ENCODE measurements at regions of chr6 and their contacts with region 1.

Region 1: GRCh38 chr6:138517635-138518034 is 18.3 kb upstream of the NHSL1 start:
- DNase-seq: no peak
- ATAC-seq: peak; percentile 77
- H3K4me3 ChIP-seq: no peak overlapping the region
- H3K27ac ChIP-seq: no peak overlapping the region
- H3K4me1 ChIP-seq: no peaks in the 10 kb centered on the region; the same call in 1 of the 2 replicates
- H3K27me3 ChIP-seq: 0 out of 4 replicates have a peak, but pooled peaks cover 0 to 2% of the 10 kb centered on the region in 2 experiments
- CTCF ChIP-seq: peak; percentile 47 to 80 (median 75)
- EP300 ChIP-seq: no peak
- POLR2A ChIP-seq: no peak
- RAD21 ChIP-seq: peak; percentile 63

Region 2: DNA sequence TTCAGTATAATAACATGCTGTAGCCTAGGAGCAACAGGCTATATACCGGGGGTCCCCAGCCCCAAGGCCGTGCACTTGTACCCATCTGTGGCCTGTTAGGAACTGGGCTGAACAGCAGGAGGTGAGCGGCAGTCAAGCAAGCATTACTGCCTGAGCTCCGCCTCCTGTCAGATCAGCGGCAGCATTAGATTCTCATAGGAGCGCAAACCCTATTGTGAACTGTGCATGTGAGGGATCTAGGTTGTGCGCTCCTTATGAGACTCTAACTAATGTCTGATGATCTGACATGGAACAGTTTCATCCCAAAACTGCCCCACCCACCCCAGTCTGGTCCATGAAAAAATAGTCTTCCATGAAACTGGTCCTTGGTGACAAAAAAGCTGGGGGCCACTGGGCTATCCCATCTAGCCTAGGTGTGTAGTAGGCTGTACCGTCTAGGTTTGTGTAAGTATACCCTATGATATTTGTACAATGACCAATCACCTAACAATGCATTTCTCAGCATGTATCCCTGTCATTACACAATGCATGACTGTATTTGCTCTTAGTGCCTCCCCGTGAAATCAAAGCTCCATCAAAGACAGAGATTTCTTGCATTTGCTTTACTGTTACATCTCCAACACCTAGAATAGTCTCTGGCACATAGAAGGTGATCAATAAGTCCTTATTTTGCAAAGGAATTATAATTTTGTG is 49.2 kb before region 1 on chr6:
- CTCF ChIA-PET with region 1: no interaction called
- POLR2A ChIA-PET with region 1: no interaction called
- RAD21 ChIA-PET with region 1: no interaction called
- SMC1A ChIA-PET with region 1: no interaction called
- in situ Hi-C with region 1: no loop called
- intact Hi-C with region 1: no loop called
- DNase-seq: no peak
- ATAC-seq: no peak
- H3K4me3 ChIP-seq: no peak overlapping the region
- H3K27ac ChIP-seq: no peak overlapping the region
- H3K4me1 ChIP-seq: no peaks in the 10 kb centered on the region
- H3K27me3 ChIP-seq: no peaks in the 10 kb centered on the region
- CTCF ChIP-seq: no peak
- EP300 ChIP-seq: no peak
- POLR2A ChIP-seq: no peak
- RAD21 ChIP-seq: no peak

Region 3: DNA sequence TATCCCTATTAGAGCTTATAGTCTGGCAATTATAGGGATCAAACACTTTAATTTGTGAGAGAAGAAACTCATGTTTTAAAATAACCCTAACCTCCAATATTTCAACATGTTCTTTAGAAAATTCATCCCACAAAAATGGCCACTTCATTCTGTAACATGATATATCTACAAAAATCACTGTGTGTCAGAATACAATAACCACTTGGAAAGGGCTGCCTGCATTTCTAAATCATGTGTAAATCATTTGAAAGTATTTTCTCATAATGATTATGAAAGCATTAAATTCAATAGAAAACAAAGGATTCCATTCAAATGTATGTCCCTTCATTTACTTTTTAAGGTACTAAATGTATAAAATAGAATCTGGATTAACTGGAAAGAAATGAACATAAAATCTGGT is 83.1 kb after region 1 on chr6:
- CTCF ChIA-PET with region 1: no interaction called
- POLR2A ChIA-PET with region 1: interaction called, 10 read pairs
- RAD21 ChIA-PET with region 1: no interaction called
- SMC1A ChIA-PET with region 1: no interaction called
- in situ Hi-C with region 1: no loop called
- intact Hi-C with region 1: no loop called
- DNase-seq: no peak
- ATAC-seq: no peak
- H3K4me3 ChIP-seq: no peak overlapping the region
- H3K27ac ChIP-seq: no peak overlapping the region
- H3K4me1 ChIP-seq: no peaks in the 10 kb centered on the region
- H3K27me3 ChIP-seq: no peaks in the 10 kb centered on the region
- CTCF ChIP-seq: no peak
- EP300 ChIP-seq: no peak
- POLR2A ChIP-seq: no peak
- RAD21 ChIP-seq: no peak

Region 4: DNA sequence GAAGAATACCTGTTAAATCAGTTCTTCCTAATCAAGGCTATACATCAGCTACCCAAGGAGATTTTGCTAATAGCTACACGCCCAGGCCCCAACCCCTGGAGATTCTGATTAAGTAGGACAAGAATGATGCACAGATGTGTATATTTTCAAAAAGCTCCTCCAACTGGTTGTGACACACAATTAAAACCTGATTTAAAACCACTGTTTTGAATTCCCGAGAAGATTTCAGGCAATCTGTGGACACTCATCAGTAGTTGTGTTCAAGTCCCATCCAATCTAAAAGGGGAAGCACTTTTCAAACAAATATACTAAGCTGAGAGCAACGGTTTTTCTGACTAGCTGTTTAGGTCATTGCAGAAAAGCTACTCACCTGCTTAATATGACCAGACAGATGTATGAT is 100.5 kb after region 1 on chr6:
- CTCF ChIA-PET with region 1: no interaction called
- POLR2A ChIA-PET with region 1: no interaction called
- RAD21 ChIA-PET with region 1: no interaction called
- SMC1A ChIA-PET with region 1: no interaction called
- in situ Hi-C with region 1: no loop called
- intact Hi-C with region 1: no loop called
- DNase-seq: no peak
- ATAC-seq: no peak
- H3K4me3 ChIP-seq: no peak overlapping the region
- H3K27ac ChIP-seq: no peak overlapping the region
- H3K4me1 ChIP-seq: no peaks in the 10 kb centered on the region
- H3K27me3 ChIP-seq: no peaks in the 10 kb centered on the region
- CTCF ChIP-seq: no peak
- EP300 ChIP-seq: no peak
- POLR2A ChIP-seq: no peak
- RAD21 ChIP-seq: no peak